ENCODE measurements at regions of chr2 and their contacts with region 1.

Region 1: GRCh38 chr2:219571311-219572236 is at the start of gene OBSL1:
- DNase-seq: peak; percentile 24
- H3K4me3 ChIP-seq: peak within 1 kb of the TSS; percentile 72
- CTCF ChIP-seq: no peak

Region 2: DNA sequence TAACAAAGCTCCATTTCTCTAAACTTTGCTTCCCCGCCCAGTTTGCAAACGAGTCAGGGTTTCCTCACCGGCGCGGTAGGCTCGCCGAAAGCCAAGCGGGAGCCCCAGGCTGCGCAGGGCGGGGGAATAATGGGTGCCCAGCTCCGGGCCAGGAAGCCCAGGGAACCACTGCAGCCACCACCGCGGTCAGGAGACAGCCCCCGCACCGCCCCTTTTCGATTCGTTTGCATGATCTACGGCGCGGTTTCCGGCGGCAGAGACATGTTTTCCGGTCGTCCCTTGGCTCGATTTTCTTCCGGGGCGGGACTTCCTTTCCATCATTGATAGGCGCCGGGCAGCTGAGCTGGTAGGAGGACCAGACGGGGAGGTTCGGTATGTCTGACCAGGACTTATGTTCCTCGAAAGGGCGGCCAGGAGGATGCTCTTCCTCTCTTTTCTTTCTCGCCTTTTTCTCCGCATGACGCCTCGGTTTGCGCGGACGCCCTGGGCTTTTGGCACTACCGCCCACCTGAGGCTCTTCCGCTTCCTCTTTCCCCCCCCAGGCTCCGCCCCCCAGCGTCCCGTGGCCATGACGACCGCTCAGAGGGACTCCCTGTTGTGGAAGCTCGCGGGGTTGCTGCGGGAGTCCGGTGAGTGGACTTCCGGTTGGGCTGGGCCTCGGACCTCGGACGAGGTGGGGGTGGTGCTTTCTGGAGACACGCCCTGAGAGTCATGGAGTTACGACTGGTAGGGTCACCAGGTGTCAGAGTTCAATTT is 26.2 kb after region 1 on chr2 and contains the start of gene STK11IP:
- CTCF ChIA-PET with region 1: no interaction called
- POLR2A ChIA-PET with region 1: interaction called, 13 read pairs
- DNase-seq: peak; percentile 70
- H3K4me3 ChIP-seq: peak within 1 kb of the TSS; percentile 84
- CTCF ChIP-seq: no peak

Measured in AG04449 (cell line).